HCT116 (cell line): ENCODE measurements at regions of chr12 and their contacts with region 1.

Region 1: DNA sequence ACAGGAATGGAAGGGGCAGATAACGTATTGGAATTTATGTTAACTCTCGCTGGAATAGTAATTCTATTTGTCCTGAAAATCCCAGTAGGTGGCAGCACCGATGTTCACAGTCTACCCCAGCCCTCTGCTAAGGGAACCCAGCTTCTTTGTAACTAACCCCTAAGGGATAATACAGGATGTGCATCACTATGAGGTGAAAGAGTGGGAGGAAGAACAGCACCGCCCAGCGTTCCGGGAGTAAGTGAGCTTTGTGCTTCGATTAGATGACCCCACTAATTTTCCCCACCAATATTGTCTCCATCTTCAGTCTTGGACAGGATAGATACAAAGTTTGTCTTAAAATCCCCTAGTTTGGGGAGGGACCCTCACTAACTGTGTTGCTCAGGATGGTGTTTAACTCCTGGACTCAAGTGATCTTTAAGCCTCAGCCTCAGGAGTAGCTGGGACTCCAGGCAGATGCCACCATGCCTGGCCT is 2.7 kb downstream of the SLC2A3 start:
- DNase-seq: peak; percentile 94
- ATAC-seq: peak; percentile 99
- H3K4me3 ChIP-seq: no peak overlapping the region; a peak in 1 of 4 replicates
- H3K27ac ChIP-seq: no peak overlapping the region
- H3K4me1 ChIP-seq: peaks cover 2 to 20% of the 10 kb centered on the region in 2 experiments; a peak in 3 of 4 replicates
- H3K27me3 ChIP-seq: no peaks in the 10 kb centered on the region
- CTCF ChIP-seq: peak; percentile 67 to 97 (median 82)
- POLR2A ChIP-seq: no peak
- RAD21 ChIP-seq: peak; percentile 86

Region 2: GRCh38 chr12:7859552-7859951 is 73.7 kb before region 1 on chr12:
- CTCF ChIA-PET with region 1: interaction called, 11 read pairs
- POLR2A ChIA-PET with region 1: no interaction called
- RAD21 ChIA-PET with region 1: interaction called in 1 of 2 experiments, 4 read pairs
- intact Hi-C with region 1: no loop called
- DNase-seq: no peak
- ATAC-seq: no peak
- H3K4me3 ChIP-seq: no peak overlapping the region
- H3K27ac ChIP-seq: no peak overlapping the region
- H3K4me1 ChIP-seq: peaks cover 0 to 16% of the 10 kb centered on the region in 2 experiments; a peak in 2 of 4 replicates
- H3K27me3 ChIP-seq: no peaks in the 10 kb centered on the region
- CTCF ChIP-seq: no peak
- POLR2A ChIP-seq: no peak
- RAD21 ChIP-seq: no peak

Region 3: DNA sequence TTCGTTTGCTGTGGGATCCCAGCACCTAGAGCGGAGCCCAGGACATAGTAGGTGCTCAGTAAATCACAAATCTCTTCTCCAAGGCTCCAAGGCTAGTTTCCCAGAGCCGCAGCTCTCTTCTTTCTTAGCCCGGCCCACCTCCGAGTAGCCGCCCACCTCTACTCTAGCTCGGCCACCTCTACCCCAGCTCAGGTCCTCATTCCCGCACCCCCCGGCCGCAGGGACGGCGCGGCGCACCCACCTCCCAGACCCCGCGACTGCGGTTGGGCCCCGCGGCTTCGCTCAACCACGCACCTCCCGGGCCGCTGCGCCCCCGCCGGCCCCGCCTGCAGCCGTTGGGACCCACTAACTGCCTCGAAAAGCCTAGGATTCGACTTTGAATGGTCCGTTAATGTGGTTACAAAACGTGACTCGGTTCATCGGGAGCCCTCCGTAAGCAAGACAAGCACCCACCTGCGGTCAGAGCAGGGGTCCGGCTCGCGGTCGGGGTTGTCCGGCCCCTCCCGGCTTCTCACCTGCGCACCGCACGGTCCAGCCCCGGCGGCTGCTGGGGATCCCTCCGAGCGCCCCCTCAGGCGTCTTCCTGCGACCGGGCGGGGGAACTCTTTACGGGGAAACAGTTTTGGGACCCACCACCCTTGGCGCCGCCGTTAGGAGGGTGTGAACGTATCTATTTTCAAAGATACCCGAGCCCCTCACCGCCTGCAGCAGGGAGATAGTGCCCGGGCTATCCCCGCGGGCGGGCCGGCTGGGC is 60.5 kb before region 1 on chr12 and contains the start of gene SLC2A14:
- CTCF ChIA-PET with region 1: no interaction called
- POLR2A ChIA-PET with region 1: no interaction called
- RAD21 ChIA-PET with region 1: no interaction called
- intact Hi-C with region 1: no loop called
- DNase-seq: no peak
- ATAC-seq: no peak
- H3K4me3 ChIP-seq: no peak within 1 kb of the TSS
- H3K27ac ChIP-seq: no peak within 1 kb of the TSS
- H3K4me1 ChIP-seq: no peaks in the 10 kb centered on the region
- H3K27me3 ChIP-seq: no peaks in the 10 kb centered on the region
- CTCF ChIP-seq: no peak
- POLR2A ChIP-seq: no peak
- RAD21 ChIP-seq: no peak
- total RNA-seq, gene SLC2A14: not detected

Region 4: DNA sequence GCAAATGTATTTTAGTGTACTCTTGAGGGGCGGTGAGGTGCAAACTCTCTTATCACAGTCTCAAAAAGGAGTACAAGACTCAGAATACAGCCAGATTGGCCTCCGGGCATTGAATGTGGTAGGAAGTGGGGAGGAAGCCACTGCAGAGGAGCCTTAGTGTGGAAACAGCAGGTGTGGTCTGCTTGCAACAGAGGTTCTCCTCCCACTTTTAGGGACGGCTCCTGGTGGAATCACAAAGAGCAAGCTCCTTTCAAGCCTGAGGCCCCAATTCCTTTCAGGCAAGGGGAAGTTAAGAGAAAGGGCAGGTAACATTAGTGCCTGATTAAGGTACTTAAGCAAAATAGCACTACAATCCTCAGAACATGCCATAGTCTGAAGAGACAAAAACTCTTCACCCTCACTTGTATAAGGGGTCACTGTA is 26.4 kb after region 1 on chr12:
- CTCF ChIA-PET with region 1: interaction called, 15 read pairs
- POLR2A ChIA-PET with region 1: interaction called, 12 read pairs
- RAD21 ChIA-PET with region 1: no interaction called
- intact Hi-C with region 1: loop called (anchors 1 kb)
- DNase-seq: no peak
- ATAC-seq: no peak
- H3K4me3 ChIP-seq: peak overlapping the region in 1 of 2 experiments; percentile 52; a peak in 1 of 4 replicates
- H3K27ac ChIP-seq: no peak overlapping the region
- H3K4me1 ChIP-seq: peaks cover 11 to 22% of the 10 kb centered on the region in 2 experiments; a peak in 3 of 4 replicates
- H3K27me3 ChIP-seq: no peaks in the 10 kb centered on the region
- CTCF ChIP-seq: no peak
- POLR2A ChIP-seq: no peak
- RAD21 ChIP-seq: no peak

Region 5: GRCh38 chr12:7981446-7981845 is 48.2 kb after region 1 on chr12:
- CTCF ChIA-PET with region 1: interaction called, 10 read pairs
- POLR2A ChIA-PET with region 1: no interaction called
- RAD21 ChIA-PET with region 1: no interaction called
- intact Hi-C with region 1: no loop called
- DNase-seq: no peak
- ATAC-seq: no peak
- H3K4me3 ChIP-seq: no peak overlapping the region
- H3K27ac ChIP-seq: no peak overlapping the region
- H3K4me1 ChIP-seq: peaks cover 10 to 42% of the 10 kb centered on the region in 2 experiments
- H3K27me3 ChIP-seq: no peaks in the 10 kb centered on the region
- CTCF ChIP-seq: no peak
- POLR2A ChIP-seq: no peak
- RAD21 ChIP-seq: no peak

Region 6: DNA sequence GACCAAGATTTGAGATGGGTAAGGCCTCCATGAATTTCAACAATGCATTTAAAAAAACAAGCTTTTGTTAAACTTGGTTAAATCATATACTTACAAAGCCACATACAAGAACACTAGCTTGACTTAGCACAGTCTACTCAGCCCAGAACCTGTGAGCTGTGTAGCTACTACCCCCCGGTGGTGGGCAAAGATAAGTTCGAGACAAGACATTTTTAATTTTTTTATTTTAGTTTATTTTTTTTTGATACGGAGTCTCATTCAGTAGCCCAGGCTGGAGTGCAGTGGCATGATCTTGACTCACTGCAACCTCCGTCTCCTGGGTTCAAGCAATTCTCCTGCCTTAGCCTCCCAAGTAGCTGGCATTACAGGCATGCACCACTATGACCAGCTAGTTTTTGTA is 145.1 kb after region 1 on chr12:
- CTCF ChIA-PET with region 1: interaction called, 18 read pairs
- POLR2A ChIA-PET with region 1: no interaction called
- RAD21 ChIA-PET with region 1: interaction called, 3 to 4 read pairs
- intact Hi-C with region 1: loop called (anchors 10 kb)
- DNase-seq: peak; percentile 50
- ATAC-seq: peak; percentile 34; the same call in 1 of the 2 replicates
- H3K4me3 ChIP-seq: no peak overlapping the region
- H3K27ac ChIP-seq: no peak overlapping the region
- H3K4me1 ChIP-seq: peaks cover 7 to 22% of the 10 kb centered on the region in 2 experiments
- H3K27me3 ChIP-seq: no peaks in the 10 kb centered on the region
- CTCF ChIP-seq: peak; percentile 47 to 71 (median 48); a peak in 5 of 6 replicates
- POLR2A ChIP-seq: no peak
- RAD21 ChIP-seq: peak; percentile 75